Left ventricle myocardium superior (tissue), 1 donor: ENCODE measurements at regions of chr3 and their contacts with region 1.

Region 1: GRCh38 chr3:138051946-138052802 is 42.2 kb downstream of the CLDN18 start:
- DNase-seq: peak; percentile 64
- ATAC-seq: peak; percentile 79

Region 2: DNA sequence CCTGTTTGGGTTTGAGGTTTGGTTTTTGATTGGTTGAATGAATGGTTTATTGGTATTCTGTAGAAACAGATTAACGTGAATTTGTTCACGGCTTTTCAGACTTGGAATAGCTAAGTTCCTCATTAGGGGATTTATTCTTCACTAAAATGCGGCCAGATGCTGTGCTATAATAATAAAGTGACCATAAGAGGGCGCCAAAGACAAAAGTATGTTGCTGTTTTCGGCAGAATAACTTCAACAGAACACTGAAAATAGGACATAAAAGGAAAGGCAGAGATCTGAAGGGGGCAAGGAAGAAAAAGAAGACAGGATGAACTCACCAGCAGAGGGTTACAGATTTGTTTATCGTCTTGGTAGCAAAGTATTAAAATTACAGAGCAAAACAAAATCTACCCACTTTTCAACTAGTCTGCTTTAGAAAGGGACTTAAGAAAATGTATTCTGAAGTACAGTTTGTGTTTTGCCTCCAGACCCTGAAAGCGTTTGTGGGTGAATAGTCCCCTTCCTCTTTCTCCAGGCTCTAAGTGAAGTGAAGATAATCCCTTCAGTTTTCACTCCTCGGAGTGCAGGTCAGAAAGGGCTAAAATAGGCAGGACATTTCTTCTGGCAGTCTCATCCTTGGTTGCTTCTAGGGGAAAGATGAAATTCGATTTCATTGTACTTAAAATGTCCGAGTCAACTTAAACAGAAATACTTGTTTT is 946.7 kb before region 1 on chr3:
- intact Hi-C with region 1: loop called (anchors 10 kb)
- DNase-seq: no peak
- ATAC-seq: peak; percentile 74

Region 3: DNA sequence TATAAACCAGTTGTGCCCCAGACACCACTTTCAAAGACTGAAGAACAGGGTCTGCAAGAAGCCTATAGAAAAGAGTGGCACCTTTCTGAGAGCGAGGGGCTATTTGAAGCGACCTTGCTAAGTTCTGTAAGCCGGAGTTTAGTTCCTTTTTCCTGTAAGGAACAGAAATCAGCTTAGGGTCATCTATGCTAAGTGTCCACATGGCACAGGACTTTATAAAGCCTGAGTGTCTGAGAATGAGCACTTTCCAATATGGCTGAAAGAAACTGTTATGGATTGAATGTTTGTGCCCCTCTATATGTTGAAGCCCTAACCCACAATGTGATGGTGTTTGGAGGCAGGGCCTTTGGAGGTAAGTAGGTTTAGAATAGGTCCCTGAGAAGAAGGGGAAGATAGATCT is 84.0 kb after region 1 on chr3:
- intact Hi-C with region 1: no loop called
- DNase-seq: no peak
- ATAC-seq: peak; percentile 47